Ascending aorta (tissue), 2 donors: ENCODE measurements at regions of chr12 and their contacts with region 1.

Region 1: GRCh38 chr12:93302331-93303229 is 75.1 kb upstream of the NUDT4 start:
- DNase-seq: peak in 1 of 2 donors; percentile 87
- H3K4me3 ChIP-seq: no peak overlapping the region
- H3K27ac ChIP-seq: peak overlapping the region; percentile 72 to 75
- H3K4me1 ChIP-seq: peaks cover 5 to 22% of the 10 kb centered on the region in 2 donors
- H3K27me3 ChIP-seq: no peaks in the 10 kb centered on the region
- CTCF ChIP-seq: no peak

Region 2: GRCh38 chr12:92987362-92987761 is 315.2 kb before region 1 on chr12:
- intact Hi-C with region 1: loop called (anchors 5 kb)
- DNase-seq: no peak
- H3K4me3 ChIP-seq: no peak overlapping the region
- H3K27ac ChIP-seq: peak overlapping the region; percentile 46 to 50
- H3K4me1 ChIP-seq: peaks cover 0 to 4% of the 10 kb centered on the region in 2 donors
- H3K27me3 ChIP-seq: no peaks in the 10 kb centered on the region
- CTCF ChIP-seq: peak; percentile 35 to 66 (median 44)

Region 3: GRCh38 chr12:93127582-93128331 is 174.8 kb before region 1 on chr12:
- intact Hi-C with region 1: loop called (anchors 2 kb)
- DNase-seq: peak; percentile 46 to 93
- H3K4me3 ChIP-seq: peak overlapping the region in 1 of 2 donors; percentile 10
- H3K27ac ChIP-seq: peak overlapping the region; percentile 77 to 81
- H3K4me1 ChIP-seq: peaks cover 3 to 18% of the 10 kb centered on the region in 2 donors
- H3K27me3 ChIP-seq: no peaks in the 10 kb centered on the region
- CTCF ChIP-seq: peak; percentile 54 to 70 (median 60)

Region 4: DNA sequence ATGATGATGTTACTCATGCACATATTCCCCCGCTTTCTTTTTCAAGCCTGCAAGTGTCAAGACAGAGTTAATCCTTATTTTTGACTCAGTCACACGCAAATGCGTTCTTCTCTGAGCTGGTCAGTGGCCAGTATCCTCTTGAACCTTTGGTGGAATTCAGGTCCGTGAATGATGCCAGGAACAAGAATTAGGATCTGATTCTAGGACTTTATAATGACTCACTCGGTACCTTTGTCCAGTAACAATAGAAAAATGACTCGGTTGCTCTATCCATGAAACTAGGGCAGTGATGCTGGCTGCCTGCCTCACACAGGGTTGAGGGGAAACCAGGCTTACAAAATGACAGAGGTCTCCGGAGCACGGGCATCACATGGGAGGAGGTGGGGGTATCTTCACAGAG is 110.6 kb before region 1 on chr12:
- intact Hi-C with region 1: loop called (anchors 2 kb)
- DNase-seq: peak; percentile 19 to 86
- H3K4me3 ChIP-seq: peak overlapping the region; percentile 28 to 29
- H3K27ac ChIP-seq: peak overlapping the region; percentile 71 to 83
- H3K4me1 ChIP-seq: peaks cover 0 to 17% of the 10 kb centered on the region in 2 donors
- H3K27me3 ChIP-seq: no peaks in the 10 kb centered on the region
- CTCF ChIP-seq: no peak

Region 5: GRCh38 chr12:93237235-93237915 is 65.2 kb before region 1 on chr12:
- intact Hi-C with region 1: loop called (anchors 5 kb)
- DNase-seq: peak; percentile 66 to 87
- H3K4me3 ChIP-seq: peak overlapping the region in 1 of 2 donors; percentile 3
- H3K27ac ChIP-seq: peak overlapping the region; percentile 66 to 81
- H3K4me1 ChIP-seq: peaks cover 2 to 6% of the 10 kb centered on the region in 2 donors
- H3K27me3 ChIP-seq: no peaks in the 10 kb centered on the region
- CTCF ChIP-seq: no peak

Region 6: GRCh38 chr12:93361151-93361919 is 58.8 kb after region 1 on chr12:
- intact Hi-C with region 1: loop called (anchors 5 kb)
- DNase-seq: peak; percentile 44 to 74
- H3K4me3 ChIP-seq: no peak overlapping the region
- H3K27ac ChIP-seq: peak overlapping the region; percentile 50 to 67
- H3K4me1 ChIP-seq: peaks cover 2 to 40% of the 10 kb centered on the region in 2 donors
- H3K27me3 ChIP-seq: no peaks in the 10 kb centered on the region
- CTCF ChIP-seq: no peak

Region 7: DNA sequence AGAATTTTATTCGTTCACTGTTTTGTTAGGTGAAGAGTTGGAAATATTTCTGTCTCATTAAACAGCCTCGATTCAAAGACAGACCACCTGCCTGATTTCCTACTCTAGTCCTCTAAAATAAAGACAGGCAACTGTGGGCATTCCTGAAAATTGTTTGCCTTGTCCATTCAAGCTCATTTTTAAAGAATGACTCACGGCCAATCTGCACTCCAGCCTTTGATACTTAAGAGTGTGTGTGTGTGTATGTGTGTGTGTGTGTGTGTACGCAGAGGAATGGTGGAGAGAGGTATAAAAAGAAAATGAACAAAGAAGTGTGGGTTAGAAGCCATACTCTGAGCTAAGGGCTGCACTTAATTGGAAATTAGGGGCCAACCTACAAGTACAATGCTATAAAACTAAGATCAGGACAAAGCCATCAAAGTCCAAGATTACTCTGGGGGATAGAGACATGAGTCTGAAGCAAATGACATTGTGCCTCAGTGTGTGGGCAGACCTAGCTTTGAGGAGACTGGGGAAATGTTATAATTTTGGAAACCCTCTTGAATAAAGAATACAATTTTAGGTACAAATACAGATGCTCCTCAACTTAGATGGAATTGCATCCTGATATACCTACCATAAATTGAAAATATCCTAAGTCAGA is 224.3 kb after region 1 on chr12:
- intact Hi-C with region 1: no loop called
- DNase-seq: no peak
- H3K4me3 ChIP-seq: no peak overlapping the region
- H3K27ac ChIP-seq: no peak overlapping the region
- H3K4me1 ChIP-seq: no peaks in the 10 kb centered on the region
- H3K27me3 ChIP-seq: no peaks in the 10 kb centered on the region
- CTCF ChIP-seq: no peak

Region 8: GRCh38 chr12:93603762-93604161 is 301.2 kb after region 1 on chr12:
- intact Hi-C with region 1: no loop called
- DNase-seq: no peak
- H3K4me3 ChIP-seq: no peak overlapping the region
- H3K27ac ChIP-seq: no peak overlapping the region
- H3K4me1 ChIP-seq: peaks cover 3% of the 10 kb centered on the region in 2 donors
- H3K27me3 ChIP-seq: no peaks in the 10 kb centered on the region
- CTCF ChIP-seq: no peak